ENCODE measurements at regions of chr3 and their contacts with region 1.

Region 1: GRCh38 chr3:126083913-126084767 is at the start of gene SLC41A3:
- DNase-seq: peak; percentile 88
- H3K4me3 Mint-ChIP-seq: peak within 1 kb of the TSS; percentile 92
- H3K27ac Mint-ChIP-seq: peak within 1 kb of the TSS; percentile 84
- H3K4me1 Mint-ChIP-seq: peaks cover 20% of the 10 kb centered on the region
- H3K27me3 Mint-ChIP-seq: no peaks in the 10 kb centered on the region
- total RNA-seq, gene SLC41A3: 24.0 to 24.7 TPM

Region 2: DNA sequence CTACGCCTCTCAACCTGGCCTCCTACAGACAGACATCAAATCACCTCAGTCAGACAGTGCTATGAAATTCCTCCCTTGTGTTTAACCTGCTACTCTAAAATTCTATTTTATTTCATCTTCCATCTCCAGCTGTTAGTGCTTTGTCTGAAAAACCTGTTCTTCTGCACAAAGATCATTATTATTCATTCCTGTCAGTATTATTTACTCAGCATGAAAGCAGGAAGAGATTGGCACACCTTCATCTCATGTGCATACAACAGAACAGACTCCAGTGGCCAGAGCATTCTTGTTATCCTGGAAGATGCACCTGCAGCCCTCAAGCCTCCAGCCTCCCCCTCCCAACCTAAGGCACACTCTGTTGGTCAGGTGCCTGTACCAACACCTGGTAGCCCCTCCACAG is 117.0 kb before region 1 on chr3:
- CTCF ChIA-PET with region 1: interaction called, 3 read pairs
- intact Hi-C with region 1: loop called (anchors 5 kb)
- DNase-seq: no peak
- H3K4me3 Mint-ChIP-seq: no peak overlapping the region
- H3K27ac Mint-ChIP-seq: no peak overlapping the region
- H3K4me1 Mint-ChIP-seq: peaks cover 3% of the 10 kb centered on the region
- H3K27me3 Mint-ChIP-seq: peaks cover 19% of the 10 kb centered on the region

Region 3: DNA sequence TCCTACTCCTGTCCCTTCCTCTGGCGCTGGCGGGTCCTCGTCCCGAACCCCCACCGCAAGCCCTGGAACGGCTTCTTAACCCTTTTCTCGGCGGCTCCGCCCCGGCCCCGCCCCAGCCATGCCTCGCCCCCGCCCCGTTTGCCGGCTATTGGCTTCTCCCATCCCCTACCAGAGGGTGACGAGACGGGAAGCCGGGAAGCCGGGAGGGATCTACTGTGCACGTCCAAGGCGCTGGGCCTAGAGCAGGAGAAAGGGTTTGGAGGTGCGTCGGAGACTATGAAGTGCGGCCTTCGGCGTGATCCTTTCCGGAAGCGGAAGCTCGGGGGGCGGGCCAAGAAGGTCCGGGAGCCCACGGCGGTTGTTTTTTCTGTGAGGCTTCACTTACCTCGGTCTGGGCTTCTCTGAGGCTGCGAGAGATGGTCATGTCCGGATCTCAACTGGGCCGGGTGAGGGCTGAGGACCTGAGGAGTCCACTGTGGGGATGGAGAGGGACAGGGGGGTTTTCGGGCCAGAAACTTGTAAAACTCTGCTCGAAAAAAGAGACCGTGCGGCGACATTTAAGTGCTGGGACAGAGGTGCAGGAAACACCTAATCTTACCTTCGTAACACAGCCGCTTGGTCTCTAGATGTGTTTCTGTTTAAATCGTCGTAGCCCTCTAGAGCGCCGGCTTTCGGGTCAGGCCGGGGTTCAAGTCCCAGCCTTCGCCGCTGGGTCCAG is 93.7 kb before region 1 on chr3:
- CTCF ChIA-PET with region 1: no interaction called
- intact Hi-C with region 1: loop called (anchors 1 kb)
- DNase-seq: peak; percentile 71
- H3K4me3 Mint-ChIP-seq: peak overlapping the region; percentile 93
- H3K27ac Mint-ChIP-seq: peak overlapping the region; percentile 91
- H3K4me1 Mint-ChIP-seq: peaks cover 3% of the 10 kb centered on the region
- H3K27me3 Mint-ChIP-seq: peaks cover 9% of the 10 kb centered on the region

Region 4: GRCh38 chr3:126357295-126358037 is 273.3 kb after region 1 on chr3 and contains the start of gene KLF15:
- CTCF ChIA-PET with region 1: no interaction called
- intact Hi-C with region 1: loop called (anchors 5 kb)
- DNase-seq: peak; percentile 76
- H3K4me3 Mint-ChIP-seq: peak within 1 kb of the TSS; percentile 82
- H3K27ac Mint-ChIP-seq: peak within 1 kb of the TSS; percentile 65
- H3K4me1 Mint-ChIP-seq: peaks cover 10% of the 10 kb centered on the region
- H3K27me3 Mint-ChIP-seq: peaks cover 41% of the 10 kb centered on the region
- total RNA-seq, gene KLF15: 0.62 to 0.89 TPM

Measured in activated naive CD4-positive, alpha-beta T cell treated with anti-CD3 and anti-CD28 coated beads for 36 hours (primary cell).